A673 (cell line): ENCODE measurements at regions of chr19 and their contacts with region 1.

Region 1: DNA sequence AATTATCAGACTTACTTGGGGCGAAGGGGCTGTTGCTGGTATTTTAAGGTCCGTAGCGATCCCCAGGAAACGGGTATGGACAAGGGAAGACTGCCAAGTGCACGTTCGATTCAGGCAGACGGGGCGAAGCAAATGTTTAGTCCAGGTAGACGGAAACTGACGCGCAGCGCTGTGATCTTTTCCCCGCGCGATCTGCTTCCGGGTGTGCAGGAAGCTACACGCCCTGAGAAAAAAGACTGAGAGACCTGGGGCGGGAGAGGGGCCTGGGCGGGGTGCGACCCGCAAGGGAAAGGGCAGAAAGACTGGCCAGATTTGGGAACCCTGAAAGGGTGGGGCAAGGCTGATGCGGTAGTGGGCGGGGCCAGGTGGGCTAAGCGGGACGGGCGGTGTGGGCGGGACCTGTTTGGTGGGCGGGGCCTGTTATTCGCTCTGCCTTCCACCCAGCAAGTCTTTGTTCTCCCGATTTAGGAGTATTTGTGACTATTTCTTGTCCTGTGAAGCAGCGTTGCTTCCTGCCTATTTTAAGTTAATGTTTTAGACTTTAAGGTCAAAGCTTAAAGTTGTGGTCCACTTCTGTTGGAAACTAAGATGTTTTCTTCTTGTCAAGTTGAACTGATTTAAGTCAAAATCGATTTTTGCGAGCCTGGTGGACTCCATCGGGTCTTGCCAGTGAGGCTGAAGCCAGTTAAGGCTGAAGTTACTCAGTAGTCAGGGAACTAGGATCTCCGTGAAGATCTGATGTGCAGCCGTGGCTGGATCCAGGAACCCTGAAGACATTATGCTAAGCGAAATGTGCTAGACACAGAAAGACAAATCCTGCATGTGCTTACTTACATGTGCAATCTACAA is at the start of gene ZNF836:
- DNase-seq: peak; percentile 77
- H3K4me3 ChIP-seq: peak within 1 kb of the TSS; percentile 73
- H3K27ac ChIP-seq: peak within 1 kb of the TSS; percentile 61
- H3K4me1 ChIP-seq: no peaks in the 10 kb centered on the region
- H3K27me3 ChIP-seq: no peaks in the 10 kb centered on the region
- CTCF ChIP-seq: no peak
- total RNA-seq, gene ZNF836: 6.1 and 7.7 TPM in 2 replicates

Region 2: DNA sequence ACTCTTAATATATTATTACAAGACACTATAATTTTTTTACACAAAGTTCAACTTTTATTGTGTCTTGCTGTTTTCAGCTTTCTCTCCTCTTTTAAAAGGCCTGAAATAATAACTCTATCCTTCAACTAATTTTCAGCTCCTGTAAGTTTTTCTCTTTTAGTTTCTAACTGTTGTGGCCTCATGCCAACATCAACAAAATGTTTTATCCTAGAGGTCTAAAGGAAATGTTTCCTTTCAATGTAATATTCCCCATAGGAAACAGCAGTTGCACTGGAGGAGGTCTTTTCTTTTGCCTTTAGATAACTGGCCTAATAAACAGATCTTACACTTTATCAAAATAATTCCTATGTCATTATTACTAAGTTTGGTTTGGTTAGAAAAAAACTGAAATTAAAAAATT is 23.3 kb before region 1 on chr19:
- CTCF ChIA-PET with region 1: no interaction called
- POLR2A ChIA-PET with region 1: interaction called, 12 read pairs
- intact Hi-C with region 1: no loop called
- DNase-seq: no peak
- H3K4me3 ChIP-seq: no peak overlapping the region
- H3K27ac ChIP-seq: no peak overlapping the region
- H3K4me1 ChIP-seq: no peaks in the 10 kb centered on the region
- H3K27me3 ChIP-seq: no peaks in the 10 kb centered on the region
- CTCF ChIP-seq: no peak

Region 3: GRCh38 chr19:52211203-52211602 is 39.7 kb after region 1 on chr19:
- CTCF ChIA-PET with region 1: no interaction called
- POLR2A ChIA-PET with region 1: no interaction called
- intact Hi-C with region 1: no loop called
- DNase-seq: no peak
- H3K4me3 ChIP-seq: no peak overlapping the region
- H3K27ac ChIP-seq: no peak overlapping the region
- H3K4me1 ChIP-seq: no peaks in the 10 kb centered on the region
- H3K27me3 ChIP-seq: no peaks in the 10 kb centered on the region
- CTCF ChIP-seq: no peak